ENCODE measurements at regions of chr4 and their contacts with region 1.

Region 1: GRCh38 chr4:4248029-4248884 is at the start of gene TMEM128:
- DNase-seq: peak; percentile 92 to 95 (median 93)
- H3K4me3 ChIP-seq: peak within 1 kb of the TSS; percentile 87 to 92 (median 87)
- H3K4me3 Mint-ChIP-seq: peak within 1 kb of the TSS; percentile 90 to 95
- H3K27ac ChIP-seq: peak within 1 kb of the TSS; percentile 96 to 97
- H3K27ac Mint-ChIP-seq: peak within 1 kb of the TSS; percentile 98 to 100 (median 99)
- H3K4me1 ChIP-seq: peaks cover 16 to 18% of the 10 kb centered on the region in 2 donors
- H3K4me1 Mint-ChIP-seq: peaks cover 20% of the 10 kb centered on the region
- H3K27me3 ChIP-seq: no peaks in the 10 kb centered on the region
- H3K27me3 Mint-ChIP-seq: peaks cover 4 to 14% (median 5%) of the 10 kb centered on the region in 3 donors
- CTCF ChIP-seq: no peak
- polyA plus RNA-seq, gene TMEM128: 11.4 to 35.1 (median 29.7) TPM

Region 2: DNA sequence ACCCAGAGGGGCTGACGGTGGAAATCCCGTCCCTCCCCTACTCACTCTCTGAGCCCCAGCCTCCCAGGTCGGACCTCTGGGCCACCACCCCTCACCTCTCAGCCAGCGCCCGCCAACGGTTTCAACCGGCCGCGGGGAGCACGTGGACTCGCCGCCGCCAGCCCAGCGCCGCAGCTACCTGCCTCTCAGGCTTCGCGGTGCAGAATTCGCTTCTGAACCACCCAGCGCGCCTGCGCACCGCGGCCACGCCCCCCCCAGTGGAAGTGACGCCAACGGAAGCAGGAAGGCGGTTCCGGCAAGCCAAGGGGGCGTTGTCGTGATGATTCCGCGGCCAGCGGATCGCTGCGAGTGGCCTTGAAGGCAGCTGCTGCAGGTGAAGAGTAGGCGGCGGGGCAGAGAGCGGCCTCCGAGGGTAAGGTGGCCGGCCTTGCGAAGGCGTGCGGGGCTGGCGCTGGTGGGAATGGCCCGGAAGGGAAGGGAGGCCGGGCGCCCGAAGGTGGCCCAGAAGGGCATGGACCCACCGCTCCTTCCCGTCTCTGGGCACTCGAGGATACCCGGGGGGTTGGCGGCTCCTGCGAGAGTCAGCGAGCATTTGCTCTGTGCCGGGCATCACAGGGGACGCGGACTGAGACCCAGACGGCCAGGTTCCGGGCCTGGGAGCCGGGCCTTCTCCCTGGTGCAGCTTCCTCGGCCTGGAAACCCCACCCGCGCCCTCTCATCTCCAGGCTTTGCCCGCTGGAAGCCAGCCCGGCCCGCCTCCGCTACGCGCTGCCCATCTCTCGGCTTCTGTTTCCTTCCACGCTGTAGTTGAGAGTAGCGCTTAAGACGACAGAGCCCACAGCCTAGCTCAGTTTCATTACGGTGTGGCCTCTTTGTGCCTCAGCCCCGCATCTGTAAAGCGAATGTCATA is 41.9 kb after region 1 on chr4 and contains the starts of genes LYAR and ZBTB49:
- intact Hi-C with region 1: loop called (anchors 2 to 5 kb)
- DNase-seq: peak; percentile 87 to 89 (median 87)
- H3K4me3 ChIP-seq: peak within 1 kb of the TSS; percentile 52 to 96 (median 91)
- H3K4me3 Mint-ChIP-seq: peak within 1 kb of the TSS; percentile 95 to 96
- H3K27ac ChIP-seq: peak within 1 kb of the TSS; percentile 46 to 84
- H3K27ac Mint-ChIP-seq: peak within 1 kb of the TSS; percentile 88 to 96 (median 90)
- H3K4me1 ChIP-seq: peaks cover 21 to 27% of the 10 kb centered on the region in 2 donors
- H3K4me1 Mint-ChIP-seq: peaks cover 23% of the 10 kb centered on the region
- H3K27me3 ChIP-seq: no peaks in the 10 kb centered on the region
- H3K27me3 Mint-ChIP-seq: peaks cover 0 to 2% (median 0%) of the 10 kb centered on the region in 3 donors
- CTCF ChIP-seq: no peak
- polyA plus RNA-seq, gene LYAR: 12.9 to 22.6 (median 14.9) TPM
- polyA plus RNA-seq, gene ZBTB49: 1.4 to 3.8 (median 1.7) TPM

Region 3: DNA sequence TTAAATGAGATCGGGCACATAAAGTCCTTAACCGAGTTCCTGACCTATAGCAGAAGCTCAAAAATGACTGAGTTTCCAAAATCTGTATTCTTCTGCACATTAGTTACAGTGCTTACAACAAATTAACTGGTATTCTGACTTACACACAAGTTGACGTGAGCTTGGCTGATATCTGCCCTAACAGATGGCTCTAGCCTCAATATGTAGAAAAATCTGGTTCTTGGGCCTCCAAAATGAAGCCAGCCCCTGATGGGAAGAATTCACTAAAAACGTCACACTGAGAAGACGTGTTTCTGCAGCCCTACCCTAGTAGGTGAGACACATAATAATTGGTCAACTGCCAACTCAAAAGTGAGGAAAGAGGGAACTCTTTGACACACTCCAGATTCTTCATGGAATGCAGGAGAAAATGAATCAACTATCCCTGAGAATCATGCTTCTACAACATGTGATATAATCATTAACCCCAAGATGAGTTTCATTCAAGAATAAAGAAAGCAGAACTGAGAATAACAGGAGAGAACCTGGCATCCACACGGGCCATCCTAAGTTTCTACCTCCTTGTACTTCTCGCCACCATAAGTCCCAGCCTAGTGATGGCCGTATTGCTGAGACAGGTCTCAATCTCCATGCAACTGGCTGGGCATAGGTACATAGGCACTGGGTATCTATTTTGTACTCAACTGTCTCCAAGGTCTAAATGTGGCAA is 285.4 kb after region 1 on chr4:
- intact Hi-C with region 1: no loop called
- DNase-seq: no peak
- H3K4me3 ChIP-seq: no peak overlapping the region
- H3K4me3 Mint-ChIP-seq: no peak overlapping the region
- H3K27ac ChIP-seq: no peak overlapping the region
- H3K27ac Mint-ChIP-seq: no peak overlapping the region
- H3K4me1 ChIP-seq: no peaks in the 10 kb centered on the region
- H3K4me1 Mint-ChIP-seq: peaks cover 16% of the 10 kb centered on the region
- H3K27me3 ChIP-seq: no peaks in the 10 kb centered on the region
- H3K27me3 Mint-ChIP-seq: peaks cover 0 to 1% (median 0%) of the 10 kb centered on the region in 3 donors
- CTCF ChIP-seq: no peak

Measured in CD14-positive monocyte (primary cell).